Activated CD4-positive, alpha-beta T cell treated with anti-CD3 and anti-CD28 coated beads for 36 hours (primary cell): ENCODE measurements at regions of chr15 and their contacts with region 1.

Region 1: GRCh38 chr15:67120839-67121643 is 55.6 kb downstream of the SMAD3 start:
- DNase-seq: peak; percentile 93
- ATAC-seq: peak; percentile 88
- H3K4me3 Mint-ChIP-seq: peak overlapping the region; percentile 70
- H3K27ac Mint-ChIP-seq: peak overlapping the region; percentile 98
- H3K4me1 Mint-ChIP-seq: peaks cover 82% of the 10 kb centered on the region
- H3K27me3 Mint-ChIP-seq: no peaks in the 10 kb centered on the region

Region 2: DNA sequence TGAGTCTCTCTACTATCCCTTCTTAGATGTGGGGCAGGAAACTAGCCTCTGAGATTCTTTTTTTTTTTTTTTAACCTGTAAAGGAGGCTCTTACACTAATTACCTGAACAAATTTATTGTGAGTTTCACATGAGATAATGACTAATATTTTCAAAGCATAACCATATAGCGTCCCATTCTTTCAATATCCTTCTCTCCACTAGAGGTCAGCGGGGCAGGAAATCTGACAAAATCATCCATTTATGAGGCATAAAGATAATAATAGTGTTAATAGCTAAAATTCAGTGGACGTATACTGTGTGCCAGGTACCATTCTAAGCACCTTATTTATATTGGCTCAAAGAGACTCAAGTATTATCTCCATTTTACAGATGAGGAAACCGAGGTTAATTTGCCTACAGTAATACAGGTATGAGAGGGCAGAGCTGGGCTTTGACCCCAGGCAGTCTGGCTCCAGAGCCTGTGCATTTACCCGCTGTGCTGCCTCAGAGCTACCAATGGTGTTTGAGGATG is 435.3 kb before region 1 on chr15:
- CTCF ChIA-PET with region 1: no interaction called
- POLR2A ChIA-PET with region 1: no interaction called
- intact Hi-C with region 1: no loop called
- DNase-seq: no peak
- ATAC-seq: no peak
- H3K4me3 Mint-ChIP-seq: no peak overlapping the region
- H3K27ac Mint-ChIP-seq: no peak overlapping the region
- H3K4me1 Mint-ChIP-seq: no peaks in the 10 kb centered on the region
- H3K27me3 Mint-ChIP-seq: no peaks in the 10 kb centered on the region

Region 3: DNA sequence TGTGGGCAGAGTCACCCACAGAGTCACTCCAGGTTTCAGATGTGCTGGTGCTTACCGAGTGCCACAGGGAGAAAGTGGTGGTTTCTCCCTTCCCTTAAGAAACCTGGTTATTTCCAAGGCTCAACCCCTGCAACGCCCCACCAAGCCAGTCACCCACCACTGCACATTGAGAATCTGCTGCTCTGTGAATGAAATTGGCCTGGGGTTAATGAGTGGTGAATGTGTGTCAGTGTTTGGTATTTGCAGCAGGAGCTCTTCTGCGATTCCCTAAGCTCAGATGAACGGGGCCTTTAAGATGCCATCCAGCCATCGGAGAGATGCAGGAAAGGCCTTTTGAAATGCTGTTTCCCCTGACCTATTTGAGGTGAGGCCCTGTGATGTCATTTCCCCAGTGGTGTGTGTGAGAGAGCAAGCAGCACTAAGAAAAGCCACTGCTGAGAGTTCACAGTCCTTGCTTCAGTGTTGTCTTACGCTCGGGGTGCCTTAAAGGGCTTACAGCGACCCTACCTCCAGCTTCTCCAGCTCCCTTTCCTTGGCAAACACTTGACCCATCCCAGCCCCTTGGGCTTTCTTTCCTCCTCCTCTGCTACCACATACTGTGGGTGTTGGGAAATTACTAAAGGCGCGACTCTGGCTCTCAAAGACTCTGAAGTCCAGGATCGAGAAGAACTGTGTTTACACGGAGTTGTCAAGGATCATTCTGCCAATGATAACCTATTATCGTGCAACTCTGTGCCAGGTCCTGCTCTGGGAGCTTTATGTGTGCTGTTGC is 13.2 kb after region 1 on chr15:
- CTCF ChIA-PET with region 1: interaction called, 4 read pairs
- POLR2A ChIA-PET with region 1: interaction called, 6 read pairs
- intact Hi-C with region 1: loop called in 1 of 2 experiments (anchors 1 kb)
- DNase-seq: peak; percentile 78
- ATAC-seq: peak; percentile 86
- H3K4me3 Mint-ChIP-seq: peak overlapping the region; percentile 80
- H3K27ac Mint-ChIP-seq: peak overlapping the region; percentile 98
- H3K4me1 Mint-ChIP-seq: peaks cover 87% of the 10 kb centered on the region
- H3K27me3 Mint-ChIP-seq: no peaks in the 10 kb centered on the region